AG04450 (cell line): ENCODE measurements at regions of chr5 and their contacts with region 1.

Region 1: GRCh38 chr5:151002250-151002649 is 18.1 kb upstream of the GPX3 start:
- DNase-seq: no peak
- H3K4me3 ChIP-seq: no peak overlapping the region
- H3K27ac ChIP-seq: no peak overlapping the region
- H3K27me3 ChIP-seq: peaks cover 9% of the 10 kb centered on the region
- CTCF ChIP-seq: peak; percentile 59

Region 2: GRCh38 chr5:151016700-151017099 is 14.4 kb after region 1 on chr5:
- CTCF ChIA-PET with region 1: interaction called, 11 read pairs
- POLR2A ChIA-PET with region 1: no interaction called
- DNase-seq: no peak
- H3K4me3 ChIP-seq: no peak overlapping the region
- H3K27ac ChIP-seq: no peak overlapping the region
- H3K27me3 ChIP-seq: peaks cover 12% of the 10 kb centered on the region
- CTCF ChIP-seq: no peak

Region 3: GRCh38 chr5:151068433-151069197 is 66.4 kb after region 1 on chr5:
- CTCF ChIA-PET with region 1: interaction called, 3 read pairs
- POLR2A ChIA-PET with region 1: interaction called, 10 read pairs
- DNase-seq: no peak
- H3K4me3 ChIP-seq: no peak overlapping the region
- H3K27ac ChIP-seq: no peak overlapping the region
- H3K27me3 ChIP-seq: no peaks in the 10 kb centered on the region
- CTCF ChIP-seq: no peak

Region 4: DNA sequence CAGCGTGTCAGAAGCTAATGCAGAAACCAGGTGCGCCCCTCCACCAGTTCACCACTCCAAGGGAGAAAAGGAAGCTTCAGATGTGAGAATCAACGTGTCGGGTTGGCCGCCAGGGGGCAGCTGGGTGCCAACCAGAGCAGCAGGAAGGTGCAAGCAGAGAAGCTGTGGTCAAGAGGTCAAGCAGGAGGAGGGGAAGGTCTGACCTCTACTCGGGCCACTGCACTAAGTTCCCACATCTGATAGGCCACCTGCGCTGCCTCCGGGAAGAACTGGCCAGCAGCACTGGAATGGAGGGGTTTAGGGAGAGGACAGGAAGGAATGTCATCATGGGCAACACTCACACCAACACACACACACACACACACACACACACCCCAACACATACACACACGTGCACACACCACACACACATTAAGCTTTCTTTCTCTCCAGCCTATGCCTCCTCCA is 124.0 kb after region 1 on chr5:
- CTCF ChIA-PET with region 1: interaction called, 12 read pairs
- POLR2A ChIA-PET with region 1: no interaction called
- DNase-seq: no peak
- H3K4me3 ChIP-seq: no peak overlapping the region
- H3K27ac ChIP-seq: no peak overlapping the region
- H3K27me3 ChIP-seq: no peaks in the 10 kb centered on the region
- CTCF ChIP-seq: peak; percentile 69

Region 5: DNA sequence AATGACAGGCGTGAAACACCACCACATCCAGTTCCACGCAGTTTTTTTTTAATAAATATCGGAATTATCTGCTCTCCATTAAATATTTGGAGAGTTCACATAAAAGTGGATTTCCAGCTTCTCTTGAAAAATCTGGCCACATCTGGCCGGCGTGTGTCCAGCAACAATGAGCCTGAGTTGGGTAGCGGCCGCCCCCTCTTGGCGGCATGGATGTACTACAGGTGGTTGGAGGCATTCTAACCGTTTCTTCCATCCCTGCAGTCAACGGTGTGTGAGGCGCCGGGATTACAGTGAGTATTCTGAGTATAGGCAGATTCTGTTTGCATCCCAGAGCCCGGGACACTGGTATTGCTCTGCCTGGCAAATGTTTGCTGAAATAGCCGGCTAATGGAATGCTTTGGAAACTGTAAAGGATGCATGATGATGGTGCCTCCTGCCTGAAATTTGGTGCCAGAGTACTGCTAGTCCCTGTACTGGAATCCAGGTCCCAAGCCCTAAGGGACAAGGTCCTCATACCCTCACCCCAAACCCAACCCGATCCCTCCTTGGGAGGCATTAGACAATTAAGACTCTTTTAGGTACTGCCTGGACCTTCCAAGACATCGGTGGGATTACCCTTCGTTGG is 237.1 kb after region 1 on chr5:
- CTCF ChIA-PET with region 1: interaction called, 13 read pairs
- POLR2A ChIA-PET with region 1: no interaction called
- DNase-seq: no peak
- H3K4me3 ChIP-seq: no peak overlapping the region
- H3K27ac ChIP-seq: no peak overlapping the region
- H3K27me3 ChIP-seq: peaks cover 17% of the 10 kb centered on the region
- CTCF ChIP-seq: peak; percentile 77

Region 6: DNA sequence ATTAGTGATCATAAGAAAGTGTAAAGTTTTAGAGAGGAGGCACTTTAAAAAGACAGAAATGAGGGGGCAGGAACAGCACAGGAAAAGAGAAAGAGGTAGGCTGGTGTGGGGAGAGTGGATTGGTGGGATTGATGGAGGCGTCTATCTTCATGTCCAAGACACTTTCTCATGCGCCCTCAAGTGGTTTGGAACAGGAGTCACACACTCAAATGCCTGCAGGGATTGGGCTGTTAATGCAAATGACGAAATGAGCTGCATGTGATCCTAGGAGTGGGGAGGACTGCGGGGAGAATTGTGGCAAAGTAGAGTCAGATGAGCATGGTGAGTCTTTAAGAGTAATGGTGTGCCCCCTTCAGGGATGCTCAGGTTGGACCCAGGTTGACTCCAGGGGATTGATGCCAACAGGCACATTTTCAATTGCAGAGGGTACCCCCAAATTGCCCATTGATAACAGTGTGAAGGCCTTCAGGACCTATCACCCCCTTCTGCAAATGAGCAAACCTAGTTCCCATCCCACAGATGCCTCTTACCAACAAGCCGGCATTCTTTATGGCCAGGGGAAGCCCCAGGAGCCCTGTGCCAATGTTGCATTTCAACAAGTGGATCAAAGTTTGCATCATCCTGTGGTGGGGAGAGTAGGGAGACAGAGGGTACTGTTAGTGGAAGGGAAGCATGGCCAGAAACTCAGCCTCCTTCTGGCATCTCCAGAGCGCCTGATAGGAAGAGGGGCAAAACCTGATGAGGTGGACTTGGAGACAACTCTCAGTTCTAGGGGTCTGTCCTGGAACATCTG is 296.0 kb after region 1 on chr5:
- CTCF ChIA-PET with region 1: no interaction called
- POLR2A ChIA-PET with region 1: no interaction called
- DNase-seq: no peak
- H3K4me3 ChIP-seq: no peak overlapping the region
- H3K27ac ChIP-seq: no peak overlapping the region
- H3K27me3 ChIP-seq: peaks cover 2% of the 10 kb centered on the region
- CTCF ChIP-seq: no peak